IMR-90 (cell line): ENCODE measurements at regions of chr12 and their contacts with region 1.

Region 1: DNA sequence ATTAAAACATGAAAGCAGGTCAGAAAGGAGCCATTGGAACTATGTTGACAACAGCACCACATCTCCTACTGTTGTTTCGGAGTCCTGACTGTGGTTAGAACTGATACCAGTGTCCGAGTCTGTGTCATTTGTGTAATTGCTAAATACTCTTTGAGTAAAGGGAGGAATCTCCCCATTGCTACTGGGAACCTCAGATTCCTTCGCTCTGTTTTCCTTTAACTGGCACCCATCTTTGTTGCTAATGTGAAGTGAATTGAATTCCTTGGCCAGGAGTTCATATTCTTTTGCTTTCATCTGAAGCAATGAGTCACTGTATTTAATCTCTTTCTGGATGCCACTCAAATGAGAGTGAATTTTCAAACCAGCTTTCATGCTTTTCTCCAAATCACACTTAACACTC is 31.5 kb downstream of the RASSF9 start:
- DNase-seq: no peak
- ATAC-seq: no peak
- H3K4me3 ChIP-seq: no peak overlapping the region
- H3K27ac ChIP-seq: no peak overlapping the region
- H3K4me1 ChIP-seq: no peaks in the 10 kb centered on the region
- H3K27me3 ChIP-seq: no peaks in the 10 kb centered on the region
- CTCF ChIP-seq: no peak
- POLR2A ChIP-seq: no peak
- RAD21 ChIP-seq: no peak

Region 2: DNA sequence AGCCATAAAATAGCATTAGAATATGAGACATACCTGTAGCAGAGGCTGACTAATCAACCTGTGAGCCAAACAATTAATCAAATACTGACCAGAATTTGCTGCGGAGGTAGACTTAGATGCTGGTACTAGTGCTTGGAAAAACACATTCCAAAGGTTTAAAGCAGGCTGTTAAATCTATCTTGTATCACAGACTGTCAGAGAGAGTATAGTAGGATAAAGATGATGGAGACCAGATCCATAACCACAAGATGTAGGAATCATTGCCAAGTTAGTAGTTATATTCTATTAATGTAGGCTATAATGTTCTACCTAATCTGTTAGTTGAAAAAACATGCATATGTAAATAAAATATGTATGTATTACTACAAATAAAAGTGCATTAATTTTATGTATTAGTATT is 1618.2 kb before region 1 on chr12:
- CTCF ChIA-PET with region 1: no interaction called
- POLR2A ChIA-PET with region 1: interaction called, 13 read pairs
- dilution Hi-C with region 1: no loop called
- in situ Hi-C with region 1: no loop called
- intact Hi-C with region 1: no loop called
- DNase-seq: no peak
- ATAC-seq: no peak
- H3K4me3 ChIP-seq: no peak overlapping the region
- H3K27ac ChIP-seq: no peak overlapping the region
- H3K4me1 ChIP-seq: no peaks in the 10 kb centered on the region
- H3K27me3 ChIP-seq: no peaks in the 10 kb centered on the region
- CTCF ChIP-seq: no peak
- POLR2A ChIP-seq: no peak
- RAD21 ChIP-seq: no peak